Panc1 (cell line): ENCODE measurements at regions of chr20 and their contacts with region 1.

Region 1: GRCh38 chr20:9262653-9263194 is 193.8 kb downstream of the PLCB4 start:
- DNase-seq: no peak
- ATAC-seq: no peak
- H3K4me3 ChIP-seq: no peak overlapping the region
- H3K27ac ChIP-seq: no peak overlapping the region
- H3K4me1 ChIP-seq: no peaks in the 10 kb centered on the region
- H3K27me3 ChIP-seq: no peaks in the 10 kb centered on the region
- CTCF ChIP-seq: no peak

Region 2: GRCh38 chr20:9375221-9375681 is 112.5 kb after region 1 on chr20:
- CTCF ChIA-PET with region 1: no interaction called
- POLR2A ChIA-PET with region 1: interaction called, 20 read pairs
- in situ Hi-C with region 1: no loop called
- intact Hi-C with region 1: no loop called
- DNase-seq: no peak
- ATAC-seq: no peak
- H3K4me3 ChIP-seq: no peak overlapping the region
- H3K27ac ChIP-seq: no peak overlapping the region
- H3K4me1 ChIP-seq: no peaks in the 10 kb centered on the region
- H3K27me3 ChIP-seq: no peaks in the 10 kb centered on the region
- CTCF ChIP-seq: no peak